ENCODE measurements at regions of chr1 and their contacts with region 1.

Region 1: GRCh38 chr1:107787299-107787698 is 177.7 kb downstream of the VAV3 start:
- DNase-seq: no peak
- CTCF ChIP-seq: no peak

Region 2: GRCh38 chr1:108125312-108126138 is 338.2 kb after region 1 on chr1:
- in situ Hi-C with region 1: loop called (anchors 5 kb)
- DNase-seq: peak; percentile 73
- CTCF ChIP-seq: peak; percentile 75

Measured in GM13976 (cell line).